HCT116 (cell line): ENCODE measurements at regions of chr5 and their contacts with region 1.

Region 1: GRCh38 chr5:93909356-93909755 is 168.0 kb upstream of the POU5F2 start:
- DNase-seq: no peak
- ATAC-seq: no peak
- H3K4me3 ChIP-seq: no peak overlapping the region
- H3K27ac ChIP-seq: no peak overlapping the region
- H3K4me1 ChIP-seq: no peaks in the 10 kb centered on the region
- H3K27me3 ChIP-seq: no peaks in the 10 kb centered on the region
- CTCF ChIP-seq: peak; percentile 7 to 32 (median 10); a peak in 2 of 6 replicates
- POLR2A ChIP-seq: no peak
- RAD21 ChIP-seq: peak; percentile 38; the same call in 1 of the 2 replicates

Region 2: DNA sequence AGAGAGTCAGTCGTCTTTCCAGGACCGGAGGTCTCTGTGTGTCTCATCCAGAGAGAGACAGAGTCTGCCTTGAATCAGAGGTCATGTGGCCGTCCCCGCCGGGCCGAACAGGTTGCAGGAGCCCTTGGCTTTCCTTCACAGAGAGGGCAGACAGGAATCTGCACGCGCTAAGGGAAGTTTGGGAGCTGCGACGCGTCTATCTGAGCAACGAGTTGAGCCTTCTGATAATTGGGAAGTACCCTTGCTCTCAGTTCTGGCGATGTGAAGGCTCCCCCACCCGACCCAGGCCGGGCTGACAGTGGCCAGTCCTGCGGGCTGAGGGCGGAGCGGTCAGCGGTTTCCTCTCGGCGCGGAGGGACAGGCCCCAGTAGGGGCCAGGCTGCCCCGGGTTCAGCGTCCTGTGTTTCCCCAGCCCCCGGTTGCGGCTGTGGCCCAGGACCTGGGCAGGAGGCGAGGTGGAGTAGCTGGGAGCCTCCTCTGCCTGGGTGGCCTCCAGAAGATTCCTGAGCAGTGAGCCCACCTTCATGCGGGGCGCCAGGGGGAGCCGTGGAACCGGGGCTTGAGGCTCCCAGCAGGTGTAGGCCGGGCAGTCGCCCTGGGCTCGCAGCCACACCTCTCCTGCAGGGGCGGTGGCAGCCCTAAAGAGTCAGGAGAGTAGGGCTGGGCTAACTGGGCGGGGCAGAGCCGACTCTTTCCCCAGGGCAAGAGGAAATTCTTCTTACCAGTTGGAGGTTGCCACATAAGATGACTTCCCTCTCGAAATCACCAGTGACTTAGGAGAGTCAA is 312.5 kb before region 1 on chr5:
- CTCF ChIA-PET with region 1: no interaction called
- POLR2A ChIA-PET with region 1: no interaction called
- RAD21 ChIA-PET with region 1: no interaction called
- intact Hi-C with region 1: loop called (anchors 5 kb)
- DNase-seq: peak; percentile 51
- ATAC-seq: peak; percentile 99
- H3K4me3 ChIP-seq: no peak overlapping the region
- H3K27ac ChIP-seq: peak overlapping the region; percentile 33
- H3K4me1 ChIP-seq: peaks cover 15 to 17% of the 10 kb centered on the region in 2 experiments
- H3K27me3 ChIP-seq: no peaks in the 10 kb centered on the region
- CTCF ChIP-seq: peak; percentile 42 to 51 (median 42); a peak in 5 of 6 replicates
- POLR2A ChIP-seq: no peak
- RAD21 ChIP-seq: peak; percentile 68